ENCODE measurements at regions of chr1 and their contacts with region 1.

Region 1: GRCh38 chr1:41639332-41639936 is 155.0 kb upstream of the EDN2 start:
- DNase-seq: no peak
- H3K4me3 Mint-ChIP-seq: peak overlapping the region; percentile 62
- H3K27ac Mint-ChIP-seq: no peak overlapping the region
- H3K4me1 Mint-ChIP-seq: peaks cover 38% of the 10 kb centered on the region
- H3K27me3 Mint-ChIP-seq: no peaks in the 10 kb centered on the region

Region 2: DNA sequence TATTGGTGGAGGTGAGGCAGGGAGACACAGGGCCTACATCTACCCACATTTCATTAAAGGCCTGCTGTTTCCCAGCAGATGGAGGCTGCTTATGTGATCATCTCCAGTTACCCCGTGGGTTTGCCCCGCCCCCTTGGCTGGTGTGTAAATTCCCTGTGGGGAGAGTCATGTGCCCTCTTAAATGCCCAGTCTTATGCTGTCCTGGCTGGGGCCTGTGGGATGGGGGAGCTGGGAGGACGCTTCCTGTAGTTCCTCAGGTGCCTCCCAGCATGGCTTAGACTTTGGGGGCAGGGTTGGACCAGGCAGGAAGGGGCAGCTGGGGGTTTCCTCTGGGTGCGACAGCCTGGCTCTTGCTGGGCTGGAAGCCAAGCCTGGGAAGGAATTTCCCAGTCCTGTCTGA is 761.7 kb before region 1 on chr1:
- intact Hi-C with region 1: no loop called
- DNase-seq: no peak
- H3K4me3 Mint-ChIP-seq: no peak overlapping the region
- H3K27ac Mint-ChIP-seq: no peak overlapping the region
- H3K4me1 Mint-ChIP-seq: peaks cover 46% of the 10 kb centered on the region
- H3K27me3 Mint-ChIP-seq: peaks cover 8% of the 10 kb centered on the region

Region 3: GRCh38 chr1:41184451-41184850 is 455.0 kb before region 1 on chr1:
- intact Hi-C with region 1: no loop called
- DNase-seq: no peak
- H3K4me3 Mint-ChIP-seq: no peak overlapping the region
- H3K27ac Mint-ChIP-seq: no peak overlapping the region
- H3K4me1 Mint-ChIP-seq: no peaks in the 10 kb centered on the region
- H3K27me3 Mint-ChIP-seq: no peaks in the 10 kb centered on the region

Region 4: DNA sequence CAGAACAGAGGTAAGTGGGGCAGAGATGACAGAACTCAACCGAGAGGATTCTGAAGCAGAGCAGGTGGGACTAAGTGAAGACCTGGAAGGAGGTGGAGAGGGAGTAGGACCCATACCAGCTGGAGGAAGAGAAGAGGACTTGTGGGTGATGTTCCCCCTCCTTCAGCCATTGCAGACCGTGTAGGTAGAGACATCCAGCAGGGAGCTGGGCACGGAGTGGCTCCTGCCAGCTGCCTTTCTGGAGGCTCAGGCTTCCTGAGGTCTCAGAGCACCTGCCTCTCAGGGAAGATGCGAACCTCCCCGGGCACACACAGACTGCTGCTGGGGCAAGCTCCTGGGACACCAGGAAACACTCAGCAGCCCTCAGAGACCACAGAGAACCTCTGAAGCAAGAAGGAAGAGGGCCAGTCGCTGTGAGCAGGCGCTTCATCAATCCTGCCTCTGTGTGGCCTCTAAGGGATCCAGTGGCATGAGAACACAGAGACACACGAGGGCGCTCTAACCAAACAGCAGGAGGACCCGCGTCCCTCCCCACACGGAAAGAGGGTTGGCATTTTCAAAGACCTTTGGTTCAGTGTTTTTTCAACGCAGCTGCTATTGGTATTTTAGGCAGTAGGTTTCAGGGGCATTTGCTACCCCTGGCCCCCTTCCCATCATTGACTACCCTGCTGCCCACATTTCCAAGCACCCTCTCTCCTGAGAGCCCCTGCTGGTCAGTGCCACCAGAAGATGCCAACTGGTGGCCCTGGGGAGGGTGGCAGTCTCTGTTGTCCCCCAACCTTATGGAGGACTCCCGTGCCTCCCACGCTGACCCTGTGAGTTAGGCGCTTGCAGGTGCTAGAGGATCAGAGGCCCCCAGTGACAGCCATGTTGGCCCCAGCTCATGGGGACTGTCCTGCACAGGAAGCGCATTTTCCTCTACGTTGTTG is 65.4 kb before region 1 on chr1:
- intact Hi-C with region 1: no loop called
- DNase-seq: peak; percentile 73
- H3K4me3 Mint-ChIP-seq: no peak overlapping the region
- H3K27ac Mint-ChIP-seq: peak overlapping the region; percentile 52
- H3K4me1 Mint-ChIP-seq: peaks cover 65% of the 10 kb centered on the region
- H3K27me3 Mint-ChIP-seq: no peaks in the 10 kb centered on the region

Region 5: GRCh38 chr1:41622859-41623723 is 16.3 kb before region 1 on chr1:
- intact Hi-C with region 1: loop called (anchors 1 kb)
- DNase-seq: no peak
- H3K4me3 Mint-ChIP-seq: peak overlapping the region; percentile 72
- H3K27ac Mint-ChIP-seq: peak overlapping the region; percentile 63
- H3K4me1 Mint-ChIP-seq: peaks cover 72% of the 10 kb centered on the region
- H3K27me3 Mint-ChIP-seq: no peaks in the 10 kb centered on the region

Region 6: DNA sequence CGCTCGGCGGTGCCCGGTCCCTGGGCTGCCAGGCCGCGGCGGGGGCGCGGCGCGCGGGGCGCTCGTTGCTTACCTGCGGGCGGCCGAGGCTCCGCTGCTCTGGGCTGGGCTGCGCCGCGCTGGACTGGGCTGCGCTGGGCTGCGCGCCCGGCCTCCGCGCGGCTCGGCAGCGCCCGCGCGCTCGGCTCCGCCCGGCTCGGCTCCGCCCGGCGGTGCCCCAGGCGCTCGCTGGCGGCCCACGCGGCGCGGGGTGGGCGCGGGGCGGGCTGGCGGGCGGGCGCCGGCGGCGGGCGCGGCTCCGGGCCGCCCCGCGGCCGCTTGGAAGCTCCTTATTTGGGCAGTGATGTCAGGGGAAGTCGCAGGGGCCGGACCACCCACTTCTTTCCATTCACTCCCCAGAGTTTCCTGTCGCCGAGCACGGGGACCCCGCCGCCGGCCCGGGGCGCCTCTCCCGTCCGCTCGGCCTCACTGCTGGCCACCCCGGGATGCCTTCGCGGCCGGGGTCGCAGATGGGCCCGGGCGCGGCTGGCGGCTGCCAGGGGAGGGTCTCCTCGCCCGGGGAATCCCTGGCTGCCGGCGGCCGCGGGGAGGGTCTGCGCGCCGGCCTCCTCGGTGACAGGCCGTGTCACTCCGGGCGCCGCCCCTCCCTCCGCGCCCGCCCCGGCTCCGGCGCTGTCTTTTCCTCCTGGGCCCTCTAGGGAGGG is 22.8 kb after region 1 on chr1:
- intact Hi-C with region 1: loop called (anchors 1 kb)
- DNase-seq: peak; percentile 73
- H3K4me3 Mint-ChIP-seq: peak overlapping the region; percentile 70
- H3K27ac Mint-ChIP-seq: peak overlapping the region; percentile 65
- H3K4me1 Mint-ChIP-seq: peaks cover 83% of the 10 kb centered on the region
- H3K27me3 Mint-ChIP-seq: no peaks in the 10 kb centered on the region

Region 7: GRCh38 chr1:41739061-41739955 is 99.9 kb after region 1 on chr1:
- intact Hi-C with region 1: loop called (anchors 1 kb)
- DNase-seq: peak; percentile 74
- H3K4me3 Mint-ChIP-seq: peak overlapping the region; percentile 66
- H3K27ac Mint-ChIP-seq: peak overlapping the region; percentile 98
- H3K4me1 Mint-ChIP-seq: peaks cover 93% of the 10 kb centered on the region
- H3K27me3 Mint-ChIP-seq: peaks cover 2% of the 10 kb centered on the region

Region 8: DNA sequence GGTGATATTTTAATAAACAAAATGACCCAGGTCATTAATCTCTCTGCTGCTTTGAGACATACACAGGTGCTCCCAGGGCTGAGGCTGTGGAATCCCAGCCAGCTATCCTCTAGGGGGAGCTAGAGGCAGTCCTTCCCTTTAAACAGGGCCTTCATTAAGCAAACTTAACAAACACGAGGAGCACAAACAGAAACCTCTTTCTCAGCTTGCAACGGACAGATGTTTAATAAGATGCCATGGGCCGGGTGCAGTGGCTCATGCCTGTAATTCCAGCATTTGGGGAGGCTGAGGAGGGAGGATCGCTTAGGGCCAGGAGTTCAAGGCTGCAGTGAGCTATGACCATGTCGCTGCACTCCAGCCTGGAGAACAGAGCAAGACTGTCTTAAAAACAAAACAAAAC is 172.6 kb after region 1 on chr1:
- intact Hi-C with region 1: loop called (anchors 1 kb)
- DNase-seq: peak; percentile 57
- H3K4me3 Mint-ChIP-seq: no peak overlapping the region
- H3K27ac Mint-ChIP-seq: peak overlapping the region; percentile 38
- H3K4me1 Mint-ChIP-seq: peaks cover 57% of the 10 kb centered on the region
- H3K27me3 Mint-ChIP-seq: peaks cover 2% of the 10 kb centered on the region

Region 9: GRCh38 chr1:41868599-41868998 is 229.2 kb after region 1 on chr1:
- intact Hi-C with region 1: loop called (anchors 1 kb)
- DNase-seq: peak; percentile 44
- H3K4me3 Mint-ChIP-seq: no peak overlapping the region
- H3K27ac Mint-ChIP-seq: peak overlapping the region; percentile 54
- H3K4me1 Mint-ChIP-seq: peaks cover 26% of the 10 kb centered on the region
- H3K27me3 Mint-ChIP-seq: no peaks in the 10 kb centered on the region

Region 10: DNA sequence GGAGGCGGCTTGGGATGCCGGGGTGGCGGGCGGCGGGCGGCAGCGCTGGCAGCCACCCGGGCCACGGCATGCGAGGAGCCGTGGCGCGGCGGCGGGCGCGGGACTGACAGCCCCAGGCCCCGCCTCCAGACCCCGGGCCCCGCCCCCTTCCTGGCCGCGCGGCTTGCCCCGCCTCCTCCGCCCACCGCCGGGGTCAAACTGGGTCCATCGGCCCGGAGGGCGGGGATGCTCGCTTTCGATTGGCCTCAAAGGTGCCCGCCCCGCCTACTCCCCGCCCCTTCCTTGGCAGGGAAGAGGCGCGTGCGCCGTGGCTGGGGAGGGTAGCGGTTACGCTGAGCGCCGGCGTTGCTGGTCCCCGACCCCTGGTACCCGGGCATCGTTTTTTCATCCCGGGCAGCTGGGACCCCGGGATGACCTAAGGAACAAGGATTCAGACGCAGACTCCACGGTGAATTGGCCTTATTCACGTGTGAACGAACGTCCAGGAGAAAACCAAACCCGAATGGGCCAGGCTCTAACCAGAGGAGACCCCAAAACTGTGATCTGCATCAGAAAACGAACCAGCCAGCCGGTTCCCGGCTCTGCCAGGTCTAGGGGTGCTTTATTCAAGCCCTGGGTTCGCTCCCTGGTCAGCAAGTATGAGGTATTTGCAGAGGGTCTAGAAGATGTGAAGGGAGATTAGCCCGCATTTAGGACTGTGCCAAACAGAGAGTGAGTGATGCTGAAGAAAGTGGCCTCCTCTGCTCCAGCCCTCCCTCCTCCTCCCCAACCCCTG is 396.6 kb after region 1 on chr1:
- intact Hi-C with region 1: loop called (anchors 10 kb)
- DNase-seq: peak; percentile 96
- H3K4me3 Mint-ChIP-seq: peak overlapping the region; percentile 80
- H3K27ac Mint-ChIP-seq: no peak overlapping the region
- H3K4me1 Mint-ChIP-seq: peaks cover 40% of the 10 kb centered on the region
- H3K27me3 Mint-ChIP-seq: peaks cover 14% of the 10 kb centered on the region